ENCODE measurements at regions of chr14 and their contacts with region 1.

Region 1: DNA sequence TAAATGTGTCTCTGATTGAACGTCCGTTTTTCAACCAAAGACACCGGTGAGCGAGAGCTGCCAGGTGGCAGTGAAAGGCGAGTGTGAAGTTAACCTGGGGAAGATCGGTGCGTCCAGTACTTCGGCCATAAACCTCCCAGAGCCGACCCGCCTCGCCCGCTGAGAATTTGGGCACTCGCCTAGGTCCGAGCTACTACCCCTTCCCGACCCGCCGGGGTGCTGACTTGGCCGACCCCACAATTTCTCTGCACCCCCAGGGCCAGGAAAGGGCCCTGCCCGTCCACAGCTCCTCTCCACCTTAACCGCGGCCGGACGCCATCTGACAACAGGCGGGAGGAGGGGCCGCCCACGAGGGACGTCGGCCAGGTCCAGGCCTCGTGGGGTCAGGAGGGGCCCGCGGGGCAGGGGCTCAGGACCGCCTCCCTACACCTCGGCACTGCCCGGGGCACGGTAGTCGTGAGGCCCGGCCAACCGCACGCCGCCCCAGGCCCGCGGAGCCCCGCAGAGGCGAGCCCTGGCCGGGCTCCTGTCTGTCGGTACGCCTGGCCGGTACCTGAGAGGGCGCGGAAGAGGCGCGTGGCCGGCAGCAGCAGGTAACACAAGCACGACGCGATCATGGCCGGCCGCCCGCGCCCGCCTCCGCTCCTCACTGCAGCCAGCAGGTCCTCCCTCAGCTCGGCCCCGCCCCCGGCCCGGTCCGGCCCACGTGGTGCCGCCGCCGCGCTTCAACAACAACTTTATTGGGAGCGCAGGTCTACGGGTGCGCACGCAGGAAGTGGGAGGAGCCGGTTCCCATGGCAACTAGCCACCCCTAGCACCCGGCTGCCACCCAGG is at the start of gene ANGEL1:
- DNase-seq: peak; percentile 90
- H3K4me3 ChIP-seq: peak within 1 kb of the TSS; percentile 72 to 85 (median 75)
- H3K27ac ChIP-seq: peak within 1 kb of the TSS; percentile 34
- H3K4me1 ChIP-seq: peaks cover 14% of the 10 kb centered on the region
- H3K27me3 ChIP-seq: peaks cover 7 to 8% of the 10 kb centered on the region in 2 experiments
- CTCF ChIP-seq: no peak
- POLR2A ChIP-seq: peak; percentile 87
- total RNA-seq, gene ANGEL1: 14.8 and 18.4 TPM in 2 replicates

Region 2: DNA sequence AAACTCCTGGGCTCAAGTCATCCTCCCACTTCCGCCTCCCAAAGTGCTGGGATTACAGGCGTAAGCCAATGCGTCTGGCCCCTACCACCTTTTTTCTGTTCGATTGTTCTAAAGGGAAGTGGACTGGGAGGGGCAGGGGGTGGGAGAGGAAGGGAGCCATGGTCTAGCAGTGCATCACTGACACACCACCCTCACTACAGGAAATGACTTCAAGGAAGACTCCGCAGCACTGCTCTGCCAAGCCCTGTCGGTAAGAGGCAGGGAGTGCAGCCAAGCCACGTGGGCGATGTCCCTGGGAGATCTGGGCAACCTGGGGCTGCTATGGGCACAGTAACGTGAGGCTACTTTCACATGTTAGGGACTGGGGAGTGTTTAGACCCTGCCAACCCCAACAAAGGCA is 31.8 kb after region 1 on chr14:
- CTCF ChIA-PET with region 1: interaction called, 3 read pairs
- POLR2A ChIA-PET with region 1: no interaction called
- dilution Hi-C with region 1: no loop called
- intact Hi-C with region 1: loop called (anchors 1 kb)
- DNase-seq: peak; percentile 78
- H3K4me3 ChIP-seq: no peak overlapping the region
- H3K27ac ChIP-seq: no peak overlapping the region
- H3K4me1 ChIP-seq: peaks cover 2% of the 10 kb centered on the region
- H3K27me3 ChIP-seq: peaks cover 0 to 5% of the 10 kb centered on the region in 2 experiments
- CTCF ChIP-seq: peak; percentile 24 to 46
- POLR2A ChIP-seq: no peak

Region 3: GRCh38 chr14:76863724-76864407 is 51.4 kb after region 1 on chr14:
- CTCF ChIA-PET with region 1: no interaction called
- POLR2A ChIA-PET with region 1: no interaction called
- dilution Hi-C with region 1: no loop called
- intact Hi-C with region 1: loop called (anchors 5 kb)
- DNase-seq: peak; percentile 43
- H3K4me3 ChIP-seq: no peak overlapping the region
- H3K27ac ChIP-seq: no peak overlapping the region
- H3K4me1 ChIP-seq: peaks cover 12% of the 10 kb centered on the region
- H3K27me3 ChIP-seq: peaks cover 3% of the 10 kb centered on the region in 2 experiments
- CTCF ChIP-seq: no peak
- POLR2A ChIP-seq: no peak